SK-N-SH (cell line): ENCODE measurements at regions of chr12 and their contacts with region 1.

Region 1: GRCh38 chr12:7142056-7142644 is 12.0 kb downstream of the CLSTN3 start:
- DNase-seq: peak; percentile 66
- H3K4me3 ChIP-seq: no peak overlapping the region; a peak in 1 of 4 replicates
- H3K27ac ChIP-seq: no peak overlapping the region
- H3K4me1 ChIP-seq: no peaks in the 10 kb centered on the region
- H3K27me3 ChIP-seq: no peaks in the 10 kb centered on the region
- CTCF ChIP-seq: peak; percentile 64
- EP300 ChIP-seq: no peak
- RAD21 ChIP-seq: peak; percentile 58

Region 2: GRCh38 chr12:7079826-7080125 is 62.4 kb before region 1 on chr12:
- CTCF ChIA-PET with region 1: no interaction called
- POLR2A ChIA-PET with region 1: no interaction called
- DNase-seq: no peak
- H3K4me3 ChIP-seq: no peak overlapping the region
- H3K27ac ChIP-seq: peak overlapping the region in 1 of 2 experiments; percentile 45; a peak in 2 of 4 replicates
- H3K4me1 ChIP-seq: peaks cover 0 to 3% of the 10 kb centered on the region in 2 experiments; a peak in 1 of 4 replicates
- H3K27me3 ChIP-seq: no peaks in the 10 kb centered on the region; the same call in 1 of the 2 replicates
- CTCF ChIP-seq: no peak
- EP300 ChIP-seq: no peak
- RAD21 ChIP-seq: no peak

Region 3: GRCh38 chr12:7108796-7109571 is 33.2 kb before region 1 on chr12 and contains the start of gene C1RL:
- CTCF ChIA-PET with region 1: interaction called, 15 read pairs
- POLR2A ChIA-PET with region 1: no interaction called
- DNase-seq: peak; percentile 77
- H3K4me3 ChIP-seq: peak within 1 kb of the TSS; percentile 55 to 56
- H3K27ac ChIP-seq: peak within 1 kb of the TSS; percentile 61 to 83
- H3K4me1 ChIP-seq: peaks cover 0 to 23% of the 10 kb centered on the region in 2 experiments; a peak in 2 of 4 replicates
- H3K27me3 ChIP-seq: no peaks in the 10 kb centered on the region
- CTCF ChIP-seq: peak; percentile 83
- EP300 ChIP-seq: no peak; a peak in 1 of 4 replicates
- RAD21 ChIP-seq: peak; percentile 66
- polyA plus RNA-seq, gene C1RL: 8.3 and 9.5 TPM in 2 replicates

Region 4: DNA sequence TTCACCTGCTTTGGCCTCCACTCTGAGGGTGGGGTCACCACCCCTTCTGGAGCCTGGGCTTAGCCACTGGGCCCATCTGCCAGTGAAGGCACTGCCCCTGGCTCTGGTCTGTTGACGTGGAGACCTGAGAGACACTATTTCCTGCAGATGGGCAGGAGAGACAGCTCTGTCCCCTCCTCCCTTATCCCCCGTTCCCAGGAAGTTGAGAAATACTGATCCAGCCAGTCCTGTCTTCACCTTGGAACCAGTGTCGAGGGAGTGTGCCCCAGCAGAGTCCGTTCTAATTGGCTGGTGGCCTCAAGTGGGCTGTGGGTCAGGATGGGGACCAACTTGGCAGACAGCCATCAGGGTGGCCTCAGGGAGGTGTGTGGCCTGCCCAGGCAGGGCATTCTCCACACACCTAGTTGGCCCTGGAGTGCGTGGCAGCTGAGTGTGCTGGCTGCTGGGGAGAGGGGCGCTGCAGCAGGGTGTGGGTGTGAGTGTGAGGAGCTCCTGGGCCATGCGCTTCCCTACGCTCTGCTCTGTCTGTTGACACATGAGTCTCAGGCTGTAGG is 13.4 kb after region 1 on chr12:
- CTCF ChIA-PET with region 1: interaction called, 49 read pairs
- POLR2A ChIA-PET with region 1: interaction called, 4 read pairs
- DNase-seq: peak; percentile 69
- H3K4me3 ChIP-seq: no peak overlapping the region
- H3K27ac ChIP-seq: peak overlapping the region in 1 of 2 experiments; percentile 86; a peak in 3 of 4 replicates
- H3K4me1 ChIP-seq: peaks cover 0 to 33% of the 10 kb centered on the region in 2 experiments; a peak in 2 of 4 replicates
- H3K27me3 ChIP-seq: no peaks in the 10 kb centered on the region
- CTCF ChIP-seq: no peak
- EP300 ChIP-seq: no peak
- RAD21 ChIP-seq: no peak

Region 5: GRCh38 chr12:7162691-7163114 is 20.6 kb after region 1 on chr12:
- CTCF ChIA-PET with region 1: interaction called, 37 read pairs
- POLR2A ChIA-PET with region 1: no interaction called
- DNase-seq: no peak
- H3K4me3 ChIP-seq: no peak overlapping the region
- H3K27ac ChIP-seq: no peak overlapping the region
- H3K4me1 ChIP-seq: peaks cover 0 to 15% of the 10 kb centered on the region in 2 experiments; a peak in 1 of 4 replicates
- H3K27me3 ChIP-seq: no peaks in the 10 kb centered on the region; the same call in 1 of the 2 replicates
- CTCF ChIP-seq: no peak; the same call in 1 of the 2 replicates
- EP300 ChIP-seq: no peak
- RAD21 ChIP-seq: no peak

Region 6: GRCh38 chr12:7180685-7181084 is 38.5 kb after region 1 on chr12:
- CTCF ChIA-PET with region 1: interaction called, 12 read pairs
- POLR2A ChIA-PET with region 1: no interaction called
- DNase-seq: no peak
- H3K4me3 ChIP-seq: no peak overlapping the region
- H3K27ac ChIP-seq: no peak overlapping the region
- H3K4me1 ChIP-seq: no peaks in the 10 kb centered on the region
- H3K27me3 ChIP-seq: no peaks in the 10 kb centered on the region; the same call in 1 of the 2 replicates
- CTCF ChIP-seq: no peak
- EP300 ChIP-seq: no peak
- RAD21 ChIP-seq: no peak

Region 7: GRCh38 chr12:7188562-7189397 is 46.6 kb after region 1 on chr12:
- CTCF ChIA-PET with region 1: interaction called, 33 read pairs
- POLR2A ChIA-PET with region 1: no interaction called
- DNase-seq: peak; percentile 75
- H3K4me3 ChIP-seq: peak overlapping the region; percentile 91 to 95
- H3K27ac ChIP-seq: peak overlapping the region; percentile 40 to 82
- H3K4me1 ChIP-seq: peaks cover 9 to 20% of the 10 kb centered on the region in 2 experiments; a peak in 3 of 4 replicates
- H3K27me3 ChIP-seq: no peaks in the 10 kb centered on the region
- CTCF ChIP-seq: peak; percentile 64
- EP300 ChIP-seq: no peak
- RAD21 ChIP-seq: peak; percentile 73